ENCODE measurements at regions of chr5 and their contacts with region 1.

Region 1: DNA sequence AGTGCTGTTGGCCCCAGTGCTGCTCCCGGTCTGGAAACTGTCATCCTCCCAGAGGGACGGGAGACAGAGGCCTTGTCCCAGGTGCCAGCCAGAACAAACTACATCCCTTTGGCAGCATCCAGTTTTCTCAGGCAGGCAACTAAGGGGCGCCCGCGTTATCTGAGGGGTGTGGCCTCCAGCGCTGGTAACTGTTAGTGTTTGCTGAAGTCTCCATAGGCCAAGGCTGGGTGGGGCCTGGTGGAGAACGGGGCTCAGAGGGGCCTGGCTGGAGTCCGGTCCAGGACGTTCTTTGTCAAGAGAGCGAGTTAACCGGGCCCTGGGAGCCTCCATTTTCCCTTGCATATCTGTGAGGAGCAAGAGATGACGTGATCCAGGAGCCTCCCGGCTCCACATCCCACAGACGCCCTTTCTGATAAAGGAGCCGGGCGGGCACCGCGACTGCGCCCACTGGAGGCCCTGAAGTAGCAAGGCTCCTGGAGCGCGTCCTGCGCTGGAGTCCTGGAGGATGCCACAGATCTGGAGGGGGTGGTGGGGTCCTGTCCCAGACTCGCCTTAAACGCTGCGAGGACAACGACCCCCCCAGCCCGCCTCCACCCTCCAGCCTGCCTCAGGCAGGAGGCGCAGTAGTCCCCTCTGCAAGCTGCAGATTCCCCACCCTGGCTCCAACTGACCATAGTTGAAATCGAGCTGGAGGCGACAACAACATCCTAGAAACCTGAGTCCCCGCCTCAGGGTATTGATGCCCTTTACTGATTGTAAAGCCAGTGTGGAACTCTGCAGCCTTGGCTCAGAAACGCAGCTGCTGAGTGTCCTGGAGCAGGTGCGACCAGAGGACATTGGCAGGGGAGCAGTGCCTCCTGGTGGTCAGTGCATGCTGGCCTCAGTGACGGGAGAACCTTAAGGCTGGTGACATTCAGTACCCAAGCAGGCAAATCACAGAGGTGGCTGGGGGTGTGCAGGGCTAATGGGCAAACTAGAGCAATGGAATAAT is 20.8 kb upstream of the ZNF354B start:
- DNase-seq: peak; percentile 76
- ATAC-seq: peak; percentile 49
- H3K4me3 Mint-ChIP-seq: no peak overlapping the region
- H3K27ac Mint-ChIP-seq: no peak overlapping the region
- H3K4me1 Mint-ChIP-seq: no peaks in the 10 kb centered on the region
- H3K27me3 Mint-ChIP-seq: peaks cover 3% of the 10 kb centered on the region

Region 2: DNA sequence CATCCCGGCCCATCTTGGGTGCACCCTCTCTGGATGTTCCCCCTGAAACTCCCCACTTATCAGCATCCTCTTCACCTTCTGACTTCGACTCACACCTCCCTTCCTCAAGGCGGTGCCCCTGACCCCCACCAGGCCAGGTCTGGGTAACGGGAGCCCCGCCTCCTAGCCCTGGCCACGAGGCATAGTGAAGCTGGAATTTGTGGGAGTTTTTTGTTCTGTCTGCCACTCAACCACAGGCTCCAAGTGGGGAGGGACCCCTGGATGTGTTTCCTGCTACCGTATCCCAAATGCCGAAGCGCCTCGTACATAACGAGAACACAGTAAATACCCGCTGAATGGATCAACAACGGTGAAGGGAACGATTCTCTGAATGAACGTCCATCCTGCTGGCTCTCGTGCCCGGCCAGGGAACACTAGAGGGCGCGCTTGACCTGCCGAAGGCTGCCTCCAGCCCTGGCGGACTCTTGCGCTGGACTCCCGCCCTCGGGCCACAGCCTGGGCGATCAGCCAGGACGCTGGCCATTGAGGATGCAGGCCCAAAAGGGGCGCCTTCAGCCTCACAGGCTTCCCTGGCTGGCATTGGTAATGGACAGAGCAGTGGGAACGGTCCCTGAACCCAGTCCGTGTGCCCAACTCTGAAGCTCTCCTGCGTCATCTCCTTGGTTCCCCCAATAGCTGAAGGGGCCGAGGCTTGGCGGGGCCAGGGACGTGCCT is 559.1 kb before region 1 on chr5:
- CTCF ChIA-PET with region 1: no interaction called
- POLR2A ChIA-PET with region 1: no interaction called
- intact Hi-C with region 1: loop called in 1 of 2 experiments (anchors 2 kb)
- DNase-seq: peak; percentile 82
- ATAC-seq: peak; percentile 53
- H3K4me3 Mint-ChIP-seq: no peak overlapping the region
- H3K27ac Mint-ChIP-seq: no peak overlapping the region
- H3K4me1 Mint-ChIP-seq: peaks cover 3% of the 10 kb centered on the region
- H3K27me3 Mint-ChIP-seq: peaks cover 8% of the 10 kb centered on the region

Region 3: DNA sequence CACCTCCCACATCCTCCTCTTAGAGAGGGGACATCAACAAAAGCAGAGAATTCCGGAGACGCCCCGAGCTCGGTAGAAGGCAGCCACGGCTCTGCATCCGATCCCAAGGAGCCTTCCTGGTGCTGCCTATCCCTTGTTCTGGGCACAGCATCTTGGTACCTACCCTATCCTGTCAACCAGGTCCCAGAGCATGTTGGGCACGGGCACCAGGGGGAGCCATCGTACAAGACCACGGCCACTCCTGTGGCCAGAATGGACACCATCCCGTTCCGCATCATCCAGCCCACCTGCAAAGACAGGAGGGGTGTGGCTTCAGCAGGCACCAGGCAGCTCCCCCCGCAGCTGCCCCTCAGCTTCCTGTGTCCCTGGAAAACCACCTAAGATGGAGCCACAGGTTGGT is 45.8 kb before region 1 on chr5:
- CTCF ChIA-PET with region 1: no interaction called
- POLR2A ChIA-PET with region 1: no interaction called
- intact Hi-C with region 1: loop called in 1 of 2 experiments (anchors 2 kb)
- DNase-seq: peak; percentile 62
- ATAC-seq: no peak
- H3K4me3 Mint-ChIP-seq: no peak overlapping the region
- H3K27ac Mint-ChIP-seq: no peak overlapping the region
- H3K4me1 Mint-ChIP-seq: no peaks in the 10 kb centered on the region
- H3K27me3 Mint-ChIP-seq: peaks cover 4% of the 10 kb centered on the region

Region 4: DNA sequence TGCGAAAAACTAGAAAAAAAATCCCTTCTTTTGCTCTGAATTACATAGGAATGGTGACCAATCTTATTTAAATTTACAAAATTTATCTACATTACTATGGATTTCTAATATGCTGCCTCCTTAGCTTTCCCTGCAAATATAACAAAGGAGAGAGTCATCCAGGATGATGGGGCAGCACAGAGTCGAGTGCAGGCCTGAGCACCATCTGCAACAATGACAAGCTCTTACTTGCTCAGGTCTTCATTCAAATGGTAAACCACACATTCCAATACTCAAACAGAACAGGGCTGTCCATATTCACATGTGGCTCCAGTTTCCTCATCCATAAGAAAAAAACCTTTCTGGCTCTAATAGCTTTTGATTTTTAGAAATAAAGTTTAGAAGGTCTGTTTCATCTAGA is 12.8 kb before region 1 on chr5:
- CTCF ChIA-PET with region 1: no interaction called
- POLR2A ChIA-PET with region 1: no interaction called
- intact Hi-C with region 1: no loop called
- DNase-seq: no peak
- ATAC-seq: no peak
- H3K4me3 Mint-ChIP-seq: no peak overlapping the region
- H3K27ac Mint-ChIP-seq: no peak overlapping the region
- H3K4me1 Mint-ChIP-seq: no peaks in the 10 kb centered on the region
- H3K27me3 Mint-ChIP-seq: peaks cover 2% of the 10 kb centered on the region